Activated naive CD4-positive, alpha-beta T cell treated with anti-CD3 and anti-CD28 coated beads for 36 hours (primary cell): ENCODE measurements at regions of chr14 and their contacts with region 1.

Region 1: GRCh38 chr14:79144896-79145295 is 974.7 kb downstream of the NRXN3 start:
- DNase-seq: no peak
- H3K4me3 Mint-ChIP-seq: no peak overlapping the region
- H3K27ac Mint-ChIP-seq: no peak overlapping the region
- H3K4me1 Mint-ChIP-seq: no peaks in the 10 kb centered on the region
- H3K27me3 Mint-ChIP-seq: peaks cover 2% of the 10 kb centered on the region

Region 2: GRCh38 chr14:79093531-79093930 is 51.4 kb before region 1 on chr14:
- CTCF ChIA-PET with region 1: no interaction called
- intact Hi-C with region 1: no loop called
- DNase-seq: no peak
- H3K4me3 Mint-ChIP-seq: no peak overlapping the region
- H3K27ac Mint-ChIP-seq: no peak overlapping the region
- H3K4me1 Mint-ChIP-seq: no peaks in the 10 kb centered on the region
- H3K27me3 Mint-ChIP-seq: no peaks in the 10 kb centered on the region

Region 3: GRCh38 chr14:79186523-79186922 is 41.6 kb after region 1 on chr14:
- CTCF ChIA-PET with region 1: no interaction called
- intact Hi-C with region 1: loop called (anchors 1 kb)
- DNase-seq: no peak
- H3K4me3 Mint-ChIP-seq: no peak overlapping the region
- H3K27ac Mint-ChIP-seq: no peak overlapping the region
- H3K4me1 Mint-ChIP-seq: no peaks in the 10 kb centered on the region
- H3K27me3 Mint-ChIP-seq: no peaks in the 10 kb centered on the region